Left ventricle myocardium inferior (tissue), 1 donor: ENCODE measurements at regions of chr6 and their contacts with region 1.

Region 1: GRCh38 chr6:147506704-147507114 is 1.8 kb upstream of the SAMD5 start:
- DNase-seq: peak; percentile 66
- H3K4me3 ChIP-seq: peak overlapping the region; percentile 81
- H3K27ac ChIP-seq: no peak overlapping the region
- H3K4me1 ChIP-seq: peaks cover 32% of the 10 kb centered on the region
- H3K27me3 ChIP-seq: peaks cover 74% of the 10 kb centered on the region
- CTCF ChIP-seq: peak; percentile 88

Region 2: DNA sequence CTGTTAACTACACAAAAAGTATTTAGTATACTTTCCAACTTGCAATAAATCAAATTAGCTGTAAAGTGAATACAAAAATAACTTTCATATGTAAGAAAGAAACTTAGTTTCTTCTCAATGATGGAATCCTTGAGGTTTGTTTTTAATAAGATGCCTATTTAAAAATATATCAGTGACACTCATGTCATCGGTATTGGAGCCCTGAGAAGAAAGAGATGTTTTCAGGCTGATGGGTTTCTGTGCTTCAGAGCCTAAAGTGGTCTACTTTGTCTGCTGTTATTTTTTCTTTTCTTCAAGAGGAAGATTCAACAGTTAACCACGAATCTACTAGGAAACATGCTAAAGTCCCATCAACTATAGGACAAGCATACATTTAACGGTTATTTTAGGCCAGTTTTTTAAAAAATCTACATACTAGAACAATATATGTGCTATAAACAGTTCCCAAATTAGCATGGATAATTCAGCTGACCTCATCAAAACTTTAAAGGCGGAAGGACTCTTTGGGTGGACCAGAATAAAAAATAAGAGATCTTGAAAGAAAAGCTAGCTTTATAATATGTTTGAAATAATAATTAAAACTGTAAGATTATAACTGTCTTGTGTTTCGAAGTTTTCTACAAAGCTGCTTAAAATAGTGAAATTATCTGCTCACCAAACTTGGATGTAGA is 145.3 kb before region 1 on chr6:
- intact Hi-C with region 1: no loop called
- DNase-seq: no peak
- H3K4me3 ChIP-seq: no peak overlapping the region
- H3K27ac ChIP-seq: no peak overlapping the region
- H3K4me1 ChIP-seq: no peaks in the 10 kb centered on the region
- H3K27me3 ChIP-seq: no peaks in the 10 kb centered on the region
- CTCF ChIP-seq: no peak

Region 3: GRCh38 chr6:147382945-147383554 is 123.7 kb before region 1 on chr6:
- intact Hi-C with region 1: no loop called
- DNase-seq: no peak
- H3K4me3 ChIP-seq: no peak overlapping the region
- H3K27ac ChIP-seq: no peak overlapping the region
- H3K4me1 ChIP-seq: no peaks in the 10 kb centered on the region
- H3K27me3 ChIP-seq: no peaks in the 10 kb centered on the region
- CTCF ChIP-seq: peak; percentile 62

Region 4: GRCh38 chr6:147651249-147652063 is 144.7 kb after region 1 on chr6:
- intact Hi-C with region 1: loop called (anchors 10 kb)
- DNase-seq: peak; percentile 22
- H3K4me3 ChIP-seq: no peak overlapping the region
- H3K27ac ChIP-seq: no peak overlapping the region
- H3K4me1 ChIP-seq: peaks cover 10% of the 10 kb centered on the region
- H3K27me3 ChIP-seq: no peaks in the 10 kb centered on the region
- CTCF ChIP-seq: peak; percentile 62

Region 5: GRCh38 chr6:148166339-148166968 is 659.7 kb after region 1 on chr6:
- intact Hi-C with region 1: loop called (anchors 5 kb)
- DNase-seq: no peak
- H3K4me3 ChIP-seq: no peak overlapping the region
- H3K27ac ChIP-seq: no peak overlapping the region
- H3K4me1 ChIP-seq: no peaks in the 10 kb centered on the region
- H3K27me3 ChIP-seq: no peaks in the 10 kb centered on the region
- CTCF ChIP-seq: peak; percentile 78